Endothelial cell of umbilical vein (primary cell): ENCODE measurements at regions of chr7 and their contacts with region 1.

Region 1: DNA sequence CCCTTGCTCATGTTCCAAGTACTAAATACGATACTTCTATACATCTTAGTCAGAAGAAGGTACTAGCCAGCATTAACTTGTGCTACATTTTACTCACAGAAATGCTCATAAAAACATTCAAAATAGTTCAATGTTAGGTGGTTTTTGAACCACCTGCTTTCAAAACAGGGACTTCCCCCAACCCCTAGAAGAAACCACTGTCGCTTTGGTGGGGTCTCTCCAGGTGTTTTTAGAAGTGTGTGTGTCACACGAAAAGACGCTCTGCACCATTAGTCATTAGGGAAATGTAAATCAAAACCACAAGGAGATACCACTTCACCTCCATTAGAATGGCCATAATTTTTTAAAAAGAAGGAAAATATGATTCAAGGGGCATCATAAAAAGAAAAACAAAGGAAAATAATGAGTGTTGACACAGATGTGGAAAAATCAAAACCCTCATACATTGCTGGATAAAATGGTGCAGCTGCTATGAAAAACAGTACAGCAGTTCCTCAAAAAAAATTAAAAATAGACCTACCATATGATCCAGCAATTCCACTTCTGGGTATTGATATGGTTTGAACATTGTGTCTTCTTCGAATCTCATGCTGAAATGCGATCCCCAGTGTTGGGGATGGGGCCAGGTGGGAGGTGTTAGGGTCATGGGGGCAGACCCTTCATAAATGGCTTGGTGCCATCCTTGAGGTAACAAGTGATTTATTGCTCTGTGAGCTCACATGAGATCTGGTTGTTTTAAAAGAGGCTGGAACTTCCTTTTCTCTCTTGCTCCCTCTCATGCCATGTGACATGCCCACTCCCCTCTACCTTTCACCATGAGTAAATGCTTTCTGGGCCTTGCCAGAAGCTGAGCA is 74.2 kb downstream of the MALSU1 start:
- DNase-seq: peak; percentile 92
- H3K4me3 ChIP-seq: no peak overlapping the region
- H3K27ac ChIP-seq: peak overlapping the region; percentile 69
- H3K4me1 ChIP-seq: peaks cover 55% of the 10 kb centered on the region
- H3K27me3 ChIP-seq: no peaks in the 10 kb centered on the region
- CTCF ChIP-seq: no peak
- POLR2A ChIP-seq: peak; percentile 39

Region 2: GRCh38 chr7:22387583-22387982 is 985.8 kb before region 1 on chr7:
- CTCF ChIA-PET with region 1: no interaction called
- POLR2A ChIA-PET with region 1: no interaction called
- dilution Hi-C with region 1: no loop called
- intact Hi-C with region 1: no loop called
- DNase-seq: no peak
- H3K4me3 ChIP-seq: no peak overlapping the region
- H3K27ac ChIP-seq: no peak overlapping the region
- H3K4me1 ChIP-seq: peaks cover 14% of the 10 kb centered on the region
- H3K27me3 ChIP-seq: no peaks in the 10 kb centered on the region
- CTCF ChIP-seq: no peak
- POLR2A ChIP-seq: no peak

Region 3: GRCh38 chr7:23347682-23348180 is 25.6 kb before region 1 on chr7:
- CTCF ChIA-PET with region 1: interaction called, 3 read pairs
- POLR2A ChIA-PET with region 1: no interaction called
- dilution Hi-C with region 1: no loop called
- intact Hi-C with region 1: loop called (anchors 1 kb)
- DNase-seq: peak; percentile 88
- H3K4me3 ChIP-seq: peak overlapping the region; percentile 27 to 67 (median 61)
- H3K27ac ChIP-seq: peak overlapping the region; percentile 88
- H3K4me1 ChIP-seq: peaks cover 80% of the 10 kb centered on the region
- H3K27me3 ChIP-seq: no peaks in the 10 kb centered on the region
- CTCF ChIP-seq: no peak
- POLR2A ChIP-seq: peak; percentile 44